IMR-90 (cell line): ENCODE measurements at regions of chr10 and their contacts with region 1.

Region 1: DNA sequence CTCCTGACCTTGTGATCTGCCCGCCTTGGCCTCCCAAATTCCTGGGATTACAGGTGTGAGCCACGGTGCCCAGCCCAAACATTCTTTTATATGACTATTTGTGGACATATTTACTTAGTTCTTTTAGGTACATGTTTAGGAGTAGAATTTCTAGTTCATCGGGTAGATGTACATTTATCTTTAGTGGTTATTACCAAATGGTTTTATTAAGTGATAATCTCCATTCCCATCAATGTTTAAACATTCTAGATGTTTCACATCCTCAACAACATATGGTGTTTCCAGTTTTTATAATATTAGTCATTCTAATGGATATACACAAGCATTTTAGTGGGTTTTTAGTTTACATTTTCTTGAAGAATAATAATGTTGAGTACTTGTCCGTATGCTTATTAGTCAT is 131.7 kb downstream of the RTKN2 start:
- DNase-seq: peak; percentile 90
- ATAC-seq: peak; percentile 82
- H3K4me3 ChIP-seq: no peak overlapping the region
- H3K27ac ChIP-seq: peak overlapping the region; percentile 100
- H3K4me1 ChIP-seq: peaks cover 12% of the 10 kb centered on the region
- H3K27me3 ChIP-seq: no peaks in the 10 kb centered on the region
- CTCF ChIP-seq: no peak
- POLR2A ChIP-seq: no peak
- RAD21 ChIP-seq: no peak

Region 2: GRCh38 chr10:62095181-62096071 is 41.5 kb before region 1 on chr10:
- CTCF ChIA-PET with region 1: no interaction called
- POLR2A ChIA-PET with region 1: no interaction called
- dilution Hi-C with region 1: no loop called
- in situ Hi-C with region 1: no loop called
- intact Hi-C with region 1: loop called (anchors 2 kb)
- DNase-seq: peak; percentile 69
- ATAC-seq: no peak
- H3K4me3 ChIP-seq: no peak overlapping the region
- H3K27ac ChIP-seq: peak overlapping the region; percentile 98; the same call in 1 of the 2 replicates
- H3K4me1 ChIP-seq: peaks cover 39% of the 10 kb centered on the region
- H3K27me3 ChIP-seq: no peaks in the 10 kb centered on the region
- CTCF ChIP-seq: no peak
- POLR2A ChIP-seq: no peak
- RAD21 ChIP-seq: no peak

Region 3: DNA sequence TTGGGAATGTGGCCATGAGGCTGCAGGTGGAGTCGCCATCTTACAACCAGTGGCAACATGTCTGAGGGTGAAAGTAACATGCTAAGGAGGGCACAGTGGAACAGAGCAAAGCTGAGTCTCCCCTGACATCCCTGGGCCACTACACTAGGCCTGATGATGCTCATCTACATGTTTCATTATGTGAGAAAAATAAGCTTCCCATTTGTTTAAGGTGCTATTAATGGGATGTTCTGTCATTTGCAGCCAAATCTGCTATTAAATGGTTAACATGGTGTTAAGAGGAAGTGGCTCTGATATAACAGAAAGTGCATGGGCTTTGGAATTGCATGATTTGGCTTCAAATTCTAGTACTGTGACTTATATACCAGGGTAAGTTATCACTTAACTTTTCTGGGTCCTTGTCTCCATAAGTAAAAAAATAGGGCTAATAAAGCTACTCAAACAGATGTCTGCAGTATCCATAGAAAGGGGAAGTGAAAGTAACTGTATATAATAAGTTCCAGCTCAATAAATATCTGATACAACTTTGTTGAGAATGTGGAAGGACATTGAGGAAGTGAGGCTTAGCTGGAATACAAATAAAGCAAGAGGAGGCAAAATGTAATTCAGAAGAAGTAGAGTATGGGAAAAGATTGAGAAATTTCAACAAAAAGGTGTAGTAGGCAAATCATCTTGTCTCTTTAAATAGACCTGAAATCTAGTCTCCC is 27.2 kb before region 1 on chr10:
- CTCF ChIA-PET with region 1: no interaction called
- POLR2A ChIA-PET with region 1: no interaction called
- dilution Hi-C with region 1: no loop called
- in situ Hi-C with region 1: no loop called
- intact Hi-C with region 1: no loop called
- DNase-seq: no peak
- ATAC-seq: peak; percentile 42; the same call in 1 of the 2 replicates
- H3K4me3 ChIP-seq: no peak overlapping the region
- H3K27ac ChIP-seq: no peak overlapping the region; the same call in 1 of the 2 replicates
- H3K4me1 ChIP-seq: peaks cover 4% of the 10 kb centered on the region
- H3K27me3 ChIP-seq: no peaks in the 10 kb centered on the region
- CTCF ChIP-seq: no peak
- POLR2A ChIP-seq: no peak
- RAD21 ChIP-seq: no peak

Region 4: GRCh38 chr10:62149621-62150020 is 12.7 kb after region 1 on chr10:
- CTCF ChIA-PET with region 1: no interaction called
- POLR2A ChIA-PET with region 1: no interaction called
- dilution Hi-C with region 1: no loop called
- in situ Hi-C with region 1: no loop called
- intact Hi-C with region 1: loop called (anchors 1 kb)
- DNase-seq: no peak
- ATAC-seq: no peak
- H3K4me3 ChIP-seq: no peak overlapping the region
- H3K27ac ChIP-seq: no peak overlapping the region; the same call in 1 of the 2 replicates
- H3K4me1 ChIP-seq: peaks cover 7% of the 10 kb centered on the region
- H3K27me3 ChIP-seq: no peaks in the 10 kb centered on the region
- CTCF ChIP-seq: no peak
- POLR2A ChIP-seq: no peak
- RAD21 ChIP-seq: no peak

Region 5: DNA sequence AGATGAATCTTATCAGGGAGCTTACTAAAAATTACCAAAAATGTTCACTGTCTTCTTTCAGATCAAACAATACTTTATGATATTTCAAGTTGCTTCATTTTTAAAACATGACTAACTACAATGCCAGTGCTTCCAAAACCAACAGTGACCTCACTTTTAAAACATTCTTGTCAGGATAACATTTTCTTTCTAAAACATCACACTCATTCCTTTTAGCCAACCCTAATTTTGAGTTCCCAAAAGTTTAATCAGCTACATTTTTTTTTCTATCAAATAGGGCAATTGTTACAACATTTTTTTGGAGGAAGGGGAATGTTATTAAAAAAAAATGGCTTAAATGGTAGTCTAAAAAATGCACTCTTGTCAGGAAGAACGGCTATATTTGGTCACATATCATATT is 94.5 kb after region 1 on chr10:
- CTCF ChIA-PET with region 1: no interaction called
- POLR2A ChIA-PET with region 1: no interaction called
- dilution Hi-C with region 1: no loop called
- in situ Hi-C with region 1: no loop called
- intact Hi-C with region 1: loop called (anchors 5 kb)
- DNase-seq: peak; percentile 92
- ATAC-seq: peak; percentile 56
- H3K4me3 ChIP-seq: no peak overlapping the region
- H3K27ac ChIP-seq: peak overlapping the region; percentile 100; the same call in 1 of the 2 replicates
- H3K4me1 ChIP-seq: peaks cover 20% of the 10 kb centered on the region
- H3K27me3 ChIP-seq: no peaks in the 10 kb centered on the region
- CTCF ChIP-seq: no peak
- POLR2A ChIP-seq: no peak
- RAD21 ChIP-seq: no peak

Region 6: DNA sequence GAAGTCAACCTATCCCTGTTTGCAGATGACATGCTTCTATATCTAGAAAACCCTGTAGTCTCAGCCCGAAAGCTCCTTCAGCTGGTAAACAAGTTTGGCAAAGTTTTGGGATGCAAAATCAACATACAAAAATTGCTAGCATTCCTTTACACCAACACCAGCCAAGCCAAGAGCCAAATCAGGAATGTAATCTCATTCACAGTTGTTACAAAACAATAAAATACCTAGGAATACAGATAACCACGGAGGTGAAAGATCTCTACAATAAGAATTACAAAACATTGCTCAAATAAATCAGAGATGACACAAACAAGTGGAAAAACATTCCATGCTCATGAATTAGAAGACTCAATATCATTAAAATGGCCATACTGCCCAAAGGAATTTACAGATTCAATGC is 186.9 kb after region 1 on chr10:
- CTCF ChIA-PET with region 1: no interaction called
- POLR2A ChIA-PET with region 1: no interaction called
- dilution Hi-C with region 1: no loop called
- in situ Hi-C with region 1: no loop called
- intact Hi-C with region 1: no loop called
- DNase-seq: no peak
- ATAC-seq: no peak
- H3K4me3 ChIP-seq: no peak overlapping the region
- H3K27ac ChIP-seq: no peak overlapping the region
- H3K4me1 ChIP-seq: no peaks in the 10 kb centered on the region
- H3K27me3 ChIP-seq: no peaks in the 10 kb centered on the region
- CTCF ChIP-seq: no peak
- POLR2A ChIP-seq: no peak
- RAD21 ChIP-seq: no peak